Panc1 (cell line): ENCODE measurements at regions of chr20 and their contacts with region 1.

Region 1: GRCh38 chr20:59455402-59456341 is 148.7 kb upstream of the PHACTR3 start:
- DNase-seq: no peak
- ATAC-seq: peak; percentile 71
- H3K4me3 ChIP-seq: no peak overlapping the region
- H3K27ac ChIP-seq: no peak overlapping the region
- H3K4me1 ChIP-seq: no peaks in the 10 kb centered on the region
- H3K27me3 ChIP-seq: peaks cover 4% of the 10 kb centered on the region; the same call in 1 of the 2 replicates
- CTCF ChIP-seq: peak; percentile 81

Region 2: GRCh38 chr20:58990651-58991445 is 464.8 kb before region 1 on chr20:
- CTCF ChIA-PET with region 1: no interaction called
- POLR2A ChIA-PET with region 1: interaction called, 12 read pairs
- in situ Hi-C with region 1: no loop called
- intact Hi-C with region 1: no loop called
- DNase-seq: no peak
- ATAC-seq: no peak
- H3K4me3 ChIP-seq: no peak overlapping the region
- H3K27ac ChIP-seq: no peak overlapping the region
- H3K4me1 ChIP-seq: no peaks in the 10 kb centered on the region
- H3K27me3 ChIP-seq: no peaks in the 10 kb centered on the region
- CTCF ChIP-seq: no peak